ENCODE measurements at regions of chrX and their contacts with region 1.

Region 1: DNA sequence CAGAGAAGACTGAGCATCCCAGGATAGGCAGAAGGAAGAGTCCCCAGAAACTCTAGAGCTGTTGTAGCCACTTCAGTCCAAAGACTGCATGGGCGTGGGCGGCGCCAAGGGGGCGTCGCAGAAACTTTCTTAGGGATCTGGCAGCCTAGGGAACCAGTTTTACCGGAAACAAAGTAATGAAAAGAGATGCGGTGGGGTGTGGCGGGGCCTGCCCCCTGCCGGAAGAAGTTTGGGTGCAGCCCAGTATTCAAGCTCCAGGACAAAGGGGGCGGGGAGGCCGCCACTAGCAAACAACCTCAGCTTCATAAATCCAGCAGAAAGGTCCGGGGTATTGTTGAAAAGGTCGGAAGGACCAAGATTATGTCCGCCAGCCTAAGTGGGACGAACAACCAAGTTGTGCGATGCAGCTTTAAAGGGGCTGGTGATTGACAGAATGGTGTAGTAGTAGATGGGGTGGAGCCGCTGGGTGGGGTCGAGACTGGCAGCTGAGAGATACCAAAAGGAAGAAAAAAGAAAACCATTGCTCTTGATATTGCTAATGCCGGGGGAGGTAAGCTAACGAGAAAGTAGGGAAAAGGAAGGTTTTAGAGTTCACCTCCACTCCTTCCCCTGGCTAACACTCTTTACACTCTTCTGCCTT is 190.5 kb downstream of the RRAGB start:
- DNase-seq: peak; percentile 67
- H3K4me3 Mint-ChIP-seq: peak overlapping the region; percentile 75
- H3K27ac Mint-ChIP-seq: peak overlapping the region; percentile 57
- H3K4me1 Mint-ChIP-seq: peaks cover 7% of the 10 kb centered on the region
- H3K27me3 Mint-ChIP-seq: no peaks in the 10 kb centered on the region

Region 2: DNA sequence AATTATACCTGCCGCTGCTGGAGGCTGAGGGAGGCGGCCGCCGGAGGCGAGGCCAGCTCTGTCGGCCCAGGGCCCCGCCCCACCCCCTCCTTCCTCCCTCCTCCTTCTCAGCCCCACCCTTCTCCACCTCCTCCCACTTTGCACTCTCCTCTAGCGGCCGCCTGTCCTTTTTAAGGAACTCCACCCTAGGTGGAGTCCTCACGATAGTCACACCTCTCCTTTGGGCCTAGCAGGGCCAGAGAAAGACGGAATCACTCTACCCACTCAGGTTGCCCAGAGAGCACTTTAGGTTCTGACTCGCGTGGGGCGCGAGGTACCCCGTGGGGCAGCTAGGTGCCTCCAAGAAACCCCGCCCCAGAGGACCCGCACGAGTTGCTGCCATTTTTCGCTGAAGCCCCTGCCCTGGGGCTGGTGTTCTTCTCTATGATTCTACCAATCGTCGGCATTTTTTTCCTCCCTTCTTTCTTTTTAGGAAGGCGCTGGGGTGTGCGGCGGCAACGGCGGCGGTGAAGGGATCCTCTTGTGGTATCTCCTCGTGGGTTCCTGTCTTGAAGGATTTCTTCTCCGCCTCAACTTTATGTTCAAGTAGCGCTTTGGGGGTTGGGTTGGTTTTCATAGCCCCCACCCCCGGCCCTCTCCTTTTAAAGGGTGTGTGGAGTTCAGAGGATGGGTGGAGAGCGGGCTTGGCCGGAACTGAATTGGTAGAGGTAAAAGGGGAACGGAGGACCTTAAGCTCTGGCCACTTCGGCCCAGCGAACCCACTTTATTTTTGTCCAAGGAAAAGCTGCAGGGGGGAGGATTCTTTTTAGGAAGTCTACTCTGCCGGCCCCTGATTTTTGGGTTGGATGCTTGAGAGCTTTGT is 324.4 kb after region 1 on chrX and contains the start of gene KLF8:
- CTCF ChIA-PET with region 1: no interaction called
- intact Hi-C with region 1: loop called (anchors 10 kb)
- DNase-seq: peak; percentile 56
- H3K4me3 Mint-ChIP-seq: peak within 1 kb of the TSS; percentile 74
- H3K27ac Mint-ChIP-seq: no peak within 1 kb of the TSS
- H3K4me1 Mint-ChIP-seq: no peaks in the 10 kb centered on the region
- H3K27me3 Mint-ChIP-seq: no peaks in the 10 kb centered on the region
- total RNA-seq, gene KLF8: 1.0 to 1.3 TPM

Measured in activated naive CD4-positive, alpha-beta T cell treated with anti-CD3 and anti-CD28 coated beads for 36 hours (primary cell).